GM12878 (cell line): ENCODE measurements at regions of chr2 and their contacts with region 1.

Region 1: DNA sequence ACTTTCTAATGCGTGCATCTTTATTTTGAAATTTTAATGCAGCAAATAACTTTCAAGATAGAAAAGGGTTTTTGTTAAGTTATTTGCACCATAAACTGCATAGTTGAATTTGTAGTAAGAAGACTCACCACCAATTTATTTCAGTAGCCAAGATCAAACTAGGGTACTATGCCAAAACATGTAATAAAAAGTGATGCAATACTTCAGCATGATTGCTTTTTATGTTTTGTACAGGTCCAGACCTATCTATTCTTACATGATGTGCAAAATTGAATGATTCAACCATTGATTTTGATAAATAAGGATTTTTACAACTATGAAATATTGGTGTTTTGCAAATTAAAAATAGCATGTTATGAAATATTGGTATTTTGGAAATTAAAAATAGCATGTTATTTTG is 26.7 kb downstream of the AGPS start:
- DNase-seq: no peak
- ATAC-seq: no peak
- H3K4me3 ChIP-seq: no peak overlapping the region
- H3K27ac ChIP-seq: no peak overlapping the region
- H3K4me1 ChIP-seq: no peaks in the 10 kb centered on the region
- H3K27me3 ChIP-seq: no peaks in the 10 kb centered on the region
- CTCF ChIP-seq: no peak
- EP300 ChIP-seq: no peak
- POLR2A ChIP-seq: no peak
- RAD21 ChIP-seq: no peak

Region 2: DNA sequence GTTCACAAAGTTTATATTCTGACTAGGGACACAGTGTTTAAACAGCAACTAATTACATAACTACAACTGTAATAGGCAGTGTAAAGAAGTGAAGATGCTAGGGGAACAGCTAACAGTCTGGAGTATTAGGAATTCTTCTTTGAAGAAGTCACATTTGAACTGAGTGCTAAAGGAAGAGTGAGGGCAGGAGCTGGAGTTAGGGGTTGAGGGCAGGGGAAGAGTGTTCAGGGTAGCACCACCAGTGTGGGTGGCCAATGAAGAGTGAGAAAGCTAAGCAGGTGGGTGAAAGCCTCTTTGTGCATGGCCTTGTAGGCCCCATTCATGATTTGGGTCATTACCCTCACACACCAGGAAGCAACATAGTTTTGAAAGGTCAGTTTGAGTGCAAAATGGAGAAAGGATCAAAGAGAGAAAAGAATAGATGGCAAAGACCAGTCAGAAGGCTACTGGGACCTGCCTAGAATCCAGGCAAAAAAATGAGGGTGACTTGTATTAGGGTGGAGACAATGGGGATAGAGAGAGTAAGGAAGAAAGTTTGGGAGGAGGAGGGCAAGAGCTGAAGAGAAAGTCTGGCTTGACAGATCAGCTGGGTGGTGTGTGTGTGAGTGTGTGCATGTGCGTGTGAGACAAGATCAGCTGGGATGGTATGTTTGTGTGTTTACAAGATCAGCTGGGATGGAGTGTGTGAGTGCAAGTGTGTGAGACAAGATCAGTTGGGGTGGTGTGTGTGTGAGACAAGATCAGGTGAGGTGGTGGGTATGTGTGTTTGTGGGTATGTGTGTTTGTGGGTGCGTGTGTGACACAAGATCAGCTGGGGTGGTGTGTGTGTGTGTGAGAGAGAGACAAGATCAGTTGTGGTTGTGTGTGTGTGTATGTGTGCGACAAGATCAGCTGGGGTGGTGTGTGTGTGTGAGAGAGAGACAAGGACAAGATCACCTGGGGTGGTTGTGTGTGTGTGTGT is 70.3 kb before region 1 on chr2:
- CTCF ChIA-PET with region 1: interaction called, 10 read pairs
- POLR2A ChIA-PET with region 1: no interaction called
- RAD21 ChIA-PET with region 1: interaction called, 6 read pairs
- SMC1A ChIA-PET with region 1: interaction called, 6 read pairs
- in situ Hi-C with region 1: no loop called
- intact Hi-C with region 1: no loop called
- DNase-seq: no peak
- ATAC-seq: peak; percentile 41
- H3K4me3 ChIP-seq: no peak overlapping the region
- H3K27ac ChIP-seq: no peak overlapping the region
- H3K4me1 ChIP-seq: peaks cover 9% of the 10 kb centered on the region
- H3K27me3 ChIP-seq: no peaks in the 10 kb centered on the region
- CTCF ChIP-seq: no peak
- EP300 ChIP-seq: no peak
- POLR2A ChIP-seq: no peak
- RAD21 ChIP-seq: no peak

Region 3: GRCh38 chr2:177392373-177393202 is 26.7 kb before region 1 on chr2 and contains the start of gene AGPS:
- CTCF ChIA-PET with region 1: interaction called, 37 read pairs
- POLR2A ChIA-PET with region 1: interaction called, 3 read pairs
- RAD21 ChIA-PET with region 1: interaction called, 7 read pairs
- SMC1A ChIA-PET with region 1: interaction called, 15 read pairs
- in situ Hi-C with region 1: no loop called
- intact Hi-C with region 1: no loop called
- DNase-seq: peak; percentile 30
- ATAC-seq: peak; percentile 92
- H3K4me3 ChIP-seq: peak within 1 kb of the TSS; percentile 91
- H3K27ac ChIP-seq: peak within 1 kb of the TSS; percentile 66
- H3K4me1 ChIP-seq: peaks cover 20% of the 10 kb centered on the region
- H3K27me3 ChIP-seq: no peaks in the 10 kb centered on the region
- CTCF ChIP-seq: no peak
- EP300 ChIP-seq: no peak
- POLR2A ChIP-seq: peak; percentile 94
- RAD21 ChIP-seq: no peak
- polyA plus RNA-seq, gene AGPS: 7.9 to 11.1 TPM

Region 4: GRCh38 chr2:177400337-177400923 is 18.8 kb before region 1 on chr2:
- CTCF ChIA-PET with region 1: interaction called, 37 read pairs
- POLR2A ChIA-PET with region 1: interaction called, 3 read pairs
- RAD21 ChIA-PET with region 1: interaction called, 7 read pairs
- SMC1A ChIA-PET with region 1: interaction called, 13 read pairs
- in situ Hi-C with region 1: no loop called
- intact Hi-C with region 1: no loop called
- DNase-seq: no peak
- ATAC-seq: peak; percentile 29
- H3K4me3 ChIP-seq: no peak overlapping the region
- H3K27ac ChIP-seq: no peak overlapping the region
- H3K4me1 ChIP-seq: peaks cover 9% of the 10 kb centered on the region
- H3K27me3 ChIP-seq: no peaks in the 10 kb centered on the region
- CTCF ChIP-seq: no peak
- EP300 ChIP-seq: no peak
- POLR2A ChIP-seq: no peak
- RAD21 ChIP-seq: no peak

Region 5: DNA sequence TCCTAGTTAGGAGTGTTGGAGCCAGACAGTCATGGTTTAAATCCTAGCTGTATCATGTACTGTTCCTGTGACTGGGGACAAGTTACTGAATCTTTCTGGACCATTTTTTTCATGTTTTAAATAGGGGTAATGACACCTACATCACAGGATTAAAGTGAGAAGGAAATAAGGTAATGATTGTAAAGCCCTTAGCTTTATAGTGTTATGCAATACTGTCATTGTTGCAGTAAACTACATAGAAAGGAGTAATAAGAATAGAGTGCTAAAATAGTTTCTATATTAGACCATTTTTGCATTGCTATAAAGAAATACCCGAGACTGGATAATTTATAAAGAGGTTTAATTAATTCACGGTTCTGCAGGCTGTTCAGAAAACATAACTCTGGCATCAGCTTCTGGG is 12.2 kb before region 1 on chr2:
- CTCF ChIA-PET with region 1: interaction called, 22 read pairs
- POLR2A ChIA-PET with region 1: no interaction called
- RAD21 ChIA-PET with region 1: no interaction called
- SMC1A ChIA-PET with region 1: interaction called, 10 read pairs
- in situ Hi-C with region 1: no loop called
- intact Hi-C with region 1: no loop called
- DNase-seq: no peak
- ATAC-seq: no peak
- H3K4me3 ChIP-seq: no peak overlapping the region
- H3K27ac ChIP-seq: no peak overlapping the region
- H3K4me1 ChIP-seq: no peaks in the 10 kb centered on the region
- H3K27me3 ChIP-seq: no peaks in the 10 kb centered on the region
- CTCF ChIP-seq: no peak
- EP300 ChIP-seq: no peak
- POLR2A ChIP-seq: no peak
- RAD21 ChIP-seq: no peak

Region 6: GRCh38 chr2:177489719-177490301 is 70.5 kb after region 1 on chr2:
- CTCF ChIA-PET with region 1: no interaction called
- POLR2A ChIA-PET with region 1: no interaction called
- RAD21 ChIA-PET with region 1: no interaction called
- SMC1A ChIA-PET with region 1: no interaction called
- in situ Hi-C with region 1: no loop called
- intact Hi-C with region 1: no loop called
- DNase-seq: no peak
- ATAC-seq: no peak
- H3K4me3 ChIP-seq: no peak overlapping the region
- H3K27ac ChIP-seq: no peak overlapping the region
- H3K4me1 ChIP-seq: no peaks in the 10 kb centered on the region
- H3K27me3 ChIP-seq: no peaks in the 10 kb centered on the region
- CTCF ChIP-seq: peak; percentile 37 to 49 (median 39); a peak in 5 of 6 replicates
- EP300 ChIP-seq: no peak
- POLR2A ChIP-seq: no peak
- RAD21 ChIP-seq: peak; percentile 65